ENCODE measurements at regions of chr14 and their contacts with region 1.

Region 1: DNA sequence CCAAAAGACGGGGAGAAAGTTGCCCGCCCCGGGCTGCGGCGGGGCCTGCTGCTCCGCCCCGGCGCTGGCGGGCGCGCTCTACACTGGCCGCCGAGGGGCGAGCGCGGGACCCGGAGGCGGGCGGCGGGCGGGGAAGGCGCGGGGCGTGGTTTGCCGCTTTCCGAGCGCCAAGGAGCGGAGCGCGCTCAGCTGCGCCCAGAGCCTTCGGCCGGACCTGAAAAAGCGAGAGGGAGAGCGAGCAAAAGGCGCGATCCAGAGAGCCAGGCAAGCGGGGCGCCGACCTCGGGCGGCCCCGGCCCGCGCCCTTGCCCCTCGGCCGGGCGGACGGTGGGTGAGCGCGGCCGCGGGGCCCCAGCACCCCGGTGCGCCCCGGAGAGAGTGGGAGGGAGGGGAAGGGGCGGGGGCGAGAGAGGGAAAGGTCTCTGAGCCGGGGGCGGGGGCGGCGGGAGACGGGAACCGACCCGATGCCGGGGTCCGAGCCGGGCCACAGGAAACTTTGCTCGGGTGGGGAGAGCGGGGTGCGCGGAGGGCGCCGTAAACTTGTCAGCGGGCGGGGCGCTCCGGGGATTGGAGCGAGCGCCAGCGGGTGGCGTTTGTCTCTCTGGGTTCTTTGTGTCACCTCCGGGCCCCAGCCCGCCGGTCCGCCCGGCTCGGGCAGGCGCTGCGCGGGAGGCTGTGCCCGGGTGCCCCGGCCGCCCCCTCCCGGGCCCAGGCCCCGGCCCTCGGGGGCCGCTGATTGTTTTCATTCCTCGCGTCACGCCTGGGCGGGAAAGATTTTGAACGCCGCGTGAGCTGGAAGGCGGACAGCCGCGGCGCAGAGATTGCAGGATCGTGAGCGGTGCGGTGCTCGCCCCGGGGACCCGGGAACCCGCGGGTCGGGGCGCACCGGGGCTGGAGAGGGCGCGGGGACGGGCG is at the start of gene SYNE2:
- DNase-seq: peak; percentile 83
- ATAC-seq: peak; percentile 91
- H3K4me3 Mint-ChIP-seq: peak within 1 kb of the TSS; percentile 92
- H3K27ac Mint-ChIP-seq: peak within 1 kb of the TSS; percentile 87
- H3K4me1 Mint-ChIP-seq: peaks cover 24% of the 10 kb centered on the region
- H3K27me3 Mint-ChIP-seq: no peaks in the 10 kb centered on the region
- CTCF ChIP-seq: no peak
- total RNA-seq, gene SYNE2: 35.0 and 40.1 TPM in 2 replicates

Region 2: DNA sequence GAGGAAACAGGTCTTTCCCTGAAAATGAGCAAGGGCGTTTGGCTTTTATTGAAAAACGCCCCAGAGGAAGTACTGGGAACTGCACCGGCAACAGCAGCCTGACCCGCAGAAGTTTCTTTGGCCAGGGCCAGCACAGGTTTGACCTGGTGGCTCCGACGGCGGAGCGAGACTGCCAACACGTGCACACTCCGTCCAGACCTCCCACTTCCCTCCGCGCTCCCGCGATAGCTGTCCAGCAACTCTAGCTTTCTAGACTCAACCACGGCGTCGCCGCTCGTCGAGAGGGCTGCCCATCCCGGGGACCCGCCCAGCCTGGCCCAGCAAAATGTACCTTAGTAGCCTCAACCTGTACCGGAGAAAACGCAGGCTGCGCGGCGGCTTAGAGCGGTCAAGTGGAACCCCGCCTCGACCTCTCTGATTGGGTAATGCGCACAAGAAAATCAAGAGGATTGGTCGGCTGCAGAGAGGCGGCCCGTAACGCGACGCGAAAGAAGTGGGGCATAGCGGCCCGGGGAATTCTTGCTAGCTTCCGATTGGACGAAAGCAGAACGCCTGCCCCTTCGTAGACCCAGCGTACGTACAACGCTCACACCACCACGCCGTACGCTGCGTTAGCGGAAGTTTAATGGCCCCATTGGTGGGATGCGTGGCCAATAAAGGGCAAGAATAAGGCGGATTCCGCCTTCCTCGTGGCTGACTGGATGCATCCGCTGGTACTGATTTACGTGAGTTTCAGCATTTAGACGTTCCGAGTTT is 211.4 kb before region 1 on chr14 and contains the start of gene WDR89:
- CTCF ChIA-PET with region 1: no interaction called
- POLR2A ChIA-PET with region 1: no interaction called
- intact Hi-C with region 1: loop called (anchors 1 kb)
- DNase-seq: peak; percentile 84
- ATAC-seq: peak; percentile 83
- H3K4me3 Mint-ChIP-seq: peak within 1 kb of the TSS; percentile 92
- H3K27ac Mint-ChIP-seq: peak within 1 kb of the TSS; percentile 98
- H3K4me1 Mint-ChIP-seq: peaks cover 34% of the 10 kb centered on the region
- H3K27me3 Mint-ChIP-seq: no peaks in the 10 kb centered on the region
- CTCF ChIP-seq: no peak
- total RNA-seq, gene WDR89: 21.9 and 24.4 TPM in 2 replicates

Region 3: DNA sequence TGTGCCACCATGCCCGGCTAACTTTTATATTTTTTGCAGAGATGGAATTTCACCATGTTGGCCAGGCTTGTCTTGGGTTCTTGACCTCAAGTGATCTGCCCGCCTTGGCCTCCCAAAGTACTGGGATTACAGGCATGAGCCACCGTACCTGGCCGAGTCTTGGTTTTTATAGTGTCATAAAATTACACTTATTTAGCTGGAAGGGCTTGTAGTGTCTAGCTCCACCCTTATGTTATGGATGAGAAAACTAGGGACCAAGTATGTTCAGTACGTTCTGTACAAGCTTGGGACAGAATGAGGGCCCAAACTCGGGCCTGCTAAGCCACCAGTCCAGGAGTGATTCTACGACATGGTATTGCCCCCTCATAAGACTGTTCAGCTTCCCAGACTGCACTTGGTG is 34.8 kb after region 1 on chr14:
- CTCF ChIA-PET with region 1: no interaction called
- POLR2A ChIA-PET with region 1: no interaction called
- intact Hi-C with region 1: loop called (anchors 5 kb)
- DNase-seq: no peak
- ATAC-seq: no peak
- H3K4me3 Mint-ChIP-seq: no peak overlapping the region
- H3K27ac Mint-ChIP-seq: no peak overlapping the region
- H3K4me1 Mint-ChIP-seq: no peaks in the 10 kb centered on the region
- H3K27me3 Mint-ChIP-seq: no peaks in the 10 kb centered on the region
- CTCF ChIP-seq: no peak

Region 4: GRCh38 chr14:63993992-63994391 is 140.9 kb after region 1 on chr14:
- CTCF ChIA-PET with region 1: no interaction called
- POLR2A ChIA-PET with region 1: no interaction called
- intact Hi-C with region 1: loop called (anchors 2 kb)
- DNase-seq: no peak
- ATAC-seq: no peak
- H3K4me3 Mint-ChIP-seq: no peak overlapping the region
- H3K27ac Mint-ChIP-seq: no peak overlapping the region
- H3K4me1 Mint-ChIP-seq: peaks cover 5% of the 10 kb centered on the region
- H3K27me3 Mint-ChIP-seq: no peaks in the 10 kb centered on the region
- CTCF ChIP-seq: no peak

Region 5: DNA sequence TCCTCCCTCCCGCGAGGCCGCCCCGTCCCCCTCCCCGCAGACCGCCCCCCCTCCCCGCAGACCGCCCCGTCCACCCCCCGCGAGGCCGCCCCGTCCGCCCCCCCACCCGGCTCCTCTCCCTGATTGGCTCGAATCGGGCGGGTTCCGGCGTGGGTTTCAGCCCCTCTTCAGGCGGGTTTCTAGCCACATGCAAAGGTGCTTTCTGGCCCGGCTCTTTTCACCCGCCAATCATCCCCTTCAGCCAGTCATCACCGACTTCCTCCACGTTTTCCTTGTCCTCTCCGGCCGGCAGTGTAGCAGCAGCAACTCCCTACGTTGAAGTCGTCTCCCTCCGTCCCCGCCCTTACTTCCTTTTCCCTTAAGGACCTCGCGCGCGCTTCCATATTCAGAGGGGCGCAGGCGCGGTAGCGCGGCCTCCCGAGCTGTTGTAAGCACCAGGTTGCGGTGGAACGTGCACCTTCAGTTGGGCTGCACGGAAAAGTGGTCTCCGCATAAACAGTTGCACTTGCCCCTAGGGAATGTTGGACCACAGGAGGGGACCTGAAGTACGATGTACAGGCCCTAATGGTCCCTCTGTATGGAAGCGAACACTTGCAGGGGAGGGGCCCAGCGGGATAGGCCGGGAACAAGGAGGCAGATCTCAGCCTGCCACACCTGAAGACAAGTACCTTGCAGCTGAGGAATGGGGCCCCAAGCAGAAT is 485.7 kb after region 1 on chr14:
- CTCF ChIA-PET with region 1: no interaction called
- POLR2A ChIA-PET with region 1: interaction called, 3 read pairs
- intact Hi-C with region 1: loop called (anchors 1 kb)
- DNase-seq: peak; percentile 76
- ATAC-seq: peak; percentile 87
- H3K4me3 Mint-ChIP-seq: peak overlapping the region; percentile 94
- H3K27ac Mint-ChIP-seq: peak overlapping the region; percentile 94
- H3K4me1 Mint-ChIP-seq: peaks cover 31% of the 10 kb centered on the region
- H3K27me3 Mint-ChIP-seq: no peaks in the 10 kb centered on the region
- CTCF ChIP-seq: no peak